MCF 10A (cell line): ENCODE measurements at regions of chr20 and their contacts with region 1.

Region 1: DNA sequence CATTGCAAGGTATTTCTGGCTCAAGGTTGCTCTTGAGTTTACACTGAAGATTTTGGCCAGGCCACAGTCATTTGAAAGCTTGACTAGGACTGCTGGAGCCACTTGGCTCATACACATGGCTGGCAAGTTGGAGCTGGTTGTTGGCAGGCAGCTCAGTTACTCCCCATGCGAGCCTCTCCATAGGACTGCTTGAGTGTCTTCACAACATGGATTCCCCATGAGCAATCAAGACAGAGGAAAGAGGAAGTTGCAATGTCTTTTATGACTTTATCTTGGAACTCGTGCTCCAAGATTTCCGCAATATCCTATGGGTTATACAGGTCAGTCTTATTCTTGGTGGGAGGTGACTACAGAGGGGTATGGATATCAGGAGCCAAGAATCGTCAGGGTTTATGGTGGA is 1.4 kb upstream of the MANBAL start:
- DNase-seq: peak; percentile 81
- H3K4me3 Mint-ChIP-seq: peak overlapping the region; percentile 85
- H3K27ac Mint-ChIP-seq: peak overlapping the region; percentile 98
- H3K4me1 Mint-ChIP-seq: peaks cover 23% of the 10 kb centered on the region
- H3K27me3 Mint-ChIP-seq: no peaks in the 10 kb centered on the region
- CTCF ChIP-seq: no peak

Region 2: GRCh38 chr20:37071481-37071911 is 216.6 kb before region 1 on chr20:
- CTCF ChIA-PET with region 1: no interaction called
- POLR2A ChIA-PET with region 1: no interaction called
- intact Hi-C with region 1: no loop called
- DNase-seq: peak; percentile 88
- H3K4me3 Mint-ChIP-seq: peak overlapping the region; percentile 40
- H3K27ac Mint-ChIP-seq: peak overlapping the region; percentile 92
- H3K4me1 Mint-ChIP-seq: peaks cover 16% of the 10 kb centered on the region
- H3K27me3 Mint-ChIP-seq: no peaks in the 10 kb centered on the region
- CTCF ChIP-seq: no peak

Region 3: DNA sequence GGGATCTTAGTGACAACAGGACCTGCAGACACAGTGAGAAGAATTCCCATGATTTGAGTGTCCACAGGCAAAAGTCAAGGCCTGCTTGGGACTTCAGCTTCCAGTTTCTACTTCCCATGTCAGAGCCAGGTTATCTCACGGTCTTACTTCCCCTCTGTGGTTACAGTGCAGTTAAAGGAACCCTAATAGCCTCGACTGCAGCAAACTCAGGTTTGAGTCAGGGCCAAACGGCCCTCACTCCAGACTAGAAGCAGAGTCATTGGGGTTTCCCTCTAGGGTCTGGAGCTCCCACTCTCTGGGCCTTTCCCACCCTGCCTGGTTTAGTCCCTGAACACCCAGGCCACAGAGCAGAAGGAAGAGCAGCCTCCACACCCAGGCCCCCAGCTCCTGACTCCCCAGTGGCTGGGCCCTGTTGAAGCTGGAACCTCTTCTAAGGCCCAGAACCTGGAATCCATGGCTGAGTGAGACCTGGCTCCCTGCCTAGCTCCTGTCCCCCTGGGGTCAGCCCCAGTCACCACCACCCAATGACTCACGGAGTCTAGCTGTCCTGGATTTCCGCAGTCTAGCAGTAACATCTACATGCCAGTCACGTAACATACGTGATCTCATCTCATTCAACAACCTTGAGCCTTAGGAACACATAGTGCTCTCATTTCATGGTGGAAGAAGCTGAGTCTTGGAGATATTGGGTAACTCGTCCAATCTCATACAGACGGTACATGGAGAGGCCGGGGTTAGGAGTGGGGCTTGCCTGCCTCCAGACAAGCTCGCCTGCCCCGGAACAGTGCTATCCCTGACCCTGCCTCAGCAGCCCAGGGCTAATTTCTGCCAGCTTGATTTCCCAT is 17.3 kb before region 1 on chr20:
- CTCF ChIA-PET with region 1: interaction called, 11 read pairs
- POLR2A ChIA-PET with region 1: interaction called, 26 read pairs
- intact Hi-C with region 1: no loop called
- DNase-seq: peak; percentile 64
- H3K4me3 Mint-ChIP-seq: no peak overlapping the region
- H3K27ac Mint-ChIP-seq: no peak overlapping the region
- H3K4me1 Mint-ChIP-seq: peaks cover 15% of the 10 kb centered on the region
- H3K27me3 Mint-ChIP-seq: no peaks in the 10 kb centered on the region
- CTCF ChIP-seq: no peak

Region 4: DNA sequence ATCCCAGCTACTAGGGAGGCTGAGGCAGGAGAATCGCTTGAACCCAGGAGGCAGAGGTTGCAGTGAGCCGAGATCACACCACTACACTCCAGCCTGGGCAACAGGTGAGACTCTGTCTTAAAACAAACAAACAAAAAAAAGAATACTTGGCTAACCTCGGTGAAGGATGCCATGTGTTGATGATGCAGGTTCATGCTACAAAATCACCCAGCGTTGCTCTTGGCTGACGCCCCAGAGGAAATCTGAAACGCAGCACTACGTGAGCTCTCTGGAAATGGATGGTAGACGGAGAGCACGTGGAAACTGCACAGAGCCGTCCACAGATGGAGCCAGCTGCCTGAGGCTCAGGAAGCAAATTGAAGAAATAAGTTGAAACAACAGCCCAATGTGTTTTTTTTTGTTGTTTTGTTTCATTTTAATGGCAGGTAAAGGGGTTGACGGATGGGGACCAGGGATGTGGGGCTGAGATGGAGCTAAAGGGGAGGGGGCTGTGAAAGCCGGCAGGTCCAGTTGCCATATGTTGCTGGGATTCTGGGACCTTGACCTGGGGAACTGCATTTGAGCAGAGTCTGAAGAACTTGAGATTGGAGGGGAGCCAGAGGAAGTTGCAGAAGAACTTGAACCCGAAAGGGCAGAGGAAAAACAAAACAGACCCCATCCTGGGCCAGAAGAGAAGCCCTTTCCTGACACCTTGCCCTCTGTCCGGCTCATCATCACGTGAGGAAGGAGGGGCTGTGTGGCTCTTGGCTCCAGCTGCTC is 11.4 kb before region 1 on chr20:
- CTCF ChIA-PET with region 1: interaction called, 20 read pairs
- POLR2A ChIA-PET with region 1: interaction called, 26 read pairs
- intact Hi-C with region 1: no loop called
- DNase-seq: peak; percentile 78
- H3K4me3 Mint-ChIP-seq: no peak overlapping the region
- H3K27ac Mint-ChIP-seq: peak overlapping the region; percentile 34
- H3K4me1 Mint-ChIP-seq: peaks cover 13% of the 10 kb centered on the region
- H3K27me3 Mint-ChIP-seq: no peaks in the 10 kb centered on the region
- CTCF ChIP-seq: peak; percentile 14

Region 5: DNA sequence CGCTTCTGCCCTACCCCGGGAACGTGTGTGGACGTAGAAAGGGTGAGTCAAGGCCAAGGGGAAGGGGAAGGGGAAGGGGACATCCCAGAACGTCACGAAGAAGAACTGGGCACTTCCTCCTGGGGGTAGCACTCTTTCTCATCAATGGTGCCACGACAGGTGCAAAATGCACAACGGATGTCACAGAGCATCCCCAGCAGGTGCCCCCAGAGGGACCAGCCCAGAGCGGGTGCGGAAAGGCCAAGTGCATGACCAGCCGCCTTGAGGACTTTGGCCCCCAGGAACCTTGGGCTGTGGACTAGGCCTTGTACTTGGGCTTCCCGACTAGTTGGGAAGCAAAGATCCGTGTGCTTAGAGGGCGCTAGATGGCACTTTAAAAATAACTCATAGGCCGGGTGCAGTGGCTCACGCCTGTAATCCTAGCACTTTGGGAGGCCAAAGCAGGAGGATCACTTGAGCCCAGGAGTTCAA is 45.8 kb after region 1 on chr20:
- CTCF ChIA-PET with region 1: interaction called, 3 read pairs
- POLR2A ChIA-PET with region 1: interaction called, 28 read pairs
- intact Hi-C with region 1: no loop called
- DNase-seq: no peak
- H3K4me3 Mint-ChIP-seq: no peak overlapping the region
- H3K27ac Mint-ChIP-seq: no peak overlapping the region
- H3K4me1 Mint-ChIP-seq: peaks cover 17% of the 10 kb centered on the region
- H3K27me3 Mint-ChIP-seq: no peaks in the 10 kb centered on the region
- CTCF ChIP-seq: no peak